Posterior cingulate gyrus (tissue), 11 donors: ENCODE measurements at regions of chr19 and their contacts with region 1.

Region 1: GRCh38 chr19:36850559-36851442 is at the start of gene ZNF345:
- DNase-seq: peak; percentile 84 to 98 (median 91)

Region 2: GRCh38 chr19:36687214-36688056 is 163.4 kb before region 1 on chr19 and contains the start of gene ZNF567:
- intact Hi-C with region 1: loop called (anchors 5 kb)
- DNase-seq: peak; percentile 96 to 100 (median 98)

Region 3: DNA sequence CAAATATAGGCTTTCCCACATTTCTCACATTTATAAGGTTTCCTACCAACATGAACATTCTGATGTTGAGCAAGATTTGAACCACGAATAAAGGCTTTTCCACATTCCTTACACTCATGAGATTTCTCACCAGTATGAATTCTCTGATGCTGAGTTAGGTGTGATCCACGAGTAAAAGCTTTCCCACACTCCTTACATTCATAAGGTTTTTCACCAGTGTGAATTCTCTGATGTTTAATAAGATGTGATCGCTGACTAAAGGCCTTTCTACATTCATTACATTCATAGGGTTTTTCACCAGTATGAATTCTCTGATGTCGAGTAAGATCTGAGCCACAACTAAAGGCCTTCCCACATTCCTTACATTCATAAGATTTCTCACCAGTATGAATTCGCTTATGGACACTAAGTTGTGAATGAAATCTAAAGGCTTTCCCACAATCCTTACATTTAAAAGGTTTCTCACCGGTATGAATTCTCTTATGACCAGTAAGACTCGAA is 31.6 kb before region 1 on chr19:
- intact Hi-C with region 1: no loop called
- DNase-seq: no peak

Region 4: DNA sequence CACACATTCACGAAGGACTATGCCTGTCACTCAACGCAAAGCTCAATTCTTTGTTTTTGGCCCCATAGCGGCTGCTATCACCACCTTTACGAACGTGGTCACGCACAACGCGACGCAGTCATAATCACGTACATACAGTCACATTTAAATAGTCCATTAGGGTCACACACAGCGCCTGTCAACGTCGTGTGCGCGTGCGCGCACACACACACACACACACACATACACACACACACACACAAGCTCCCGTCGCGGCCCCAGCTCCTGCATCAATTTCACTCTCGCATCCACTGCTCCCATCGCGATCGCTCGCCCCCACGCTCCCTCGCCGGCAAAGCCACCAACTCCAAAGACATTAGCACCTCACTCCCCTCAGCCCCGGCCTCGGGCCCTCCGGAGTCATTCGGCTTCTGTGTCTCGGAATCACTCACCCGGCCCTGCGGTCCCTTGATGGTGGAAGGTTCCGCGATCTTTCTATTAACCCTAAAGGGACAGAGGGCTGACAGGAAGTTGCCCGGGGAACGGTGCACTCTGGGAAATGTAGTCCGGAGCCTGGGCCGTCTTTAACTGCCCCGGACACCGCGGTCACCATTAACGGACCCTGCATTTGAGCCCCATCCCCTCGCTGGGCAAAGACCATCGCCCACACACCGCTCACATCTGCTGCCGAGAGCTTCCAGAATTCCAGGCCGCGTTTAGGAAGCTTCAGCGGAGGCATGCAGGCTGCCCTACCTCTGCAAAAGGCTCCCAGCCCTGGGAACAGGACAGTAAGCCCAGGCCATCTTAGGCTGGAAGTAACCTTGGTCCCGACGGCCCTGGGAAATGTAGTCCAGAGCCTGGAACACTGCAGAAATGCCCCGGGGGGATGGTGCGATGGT is 12.7 kb before region 1 on chr19 and contains the start of gene ZNF790:
- intact Hi-C with region 1: loop called (anchors 1 kb)
- DNase-seq: peak; percentile 87 to 98 (median 92)

Region 5: DNA sequence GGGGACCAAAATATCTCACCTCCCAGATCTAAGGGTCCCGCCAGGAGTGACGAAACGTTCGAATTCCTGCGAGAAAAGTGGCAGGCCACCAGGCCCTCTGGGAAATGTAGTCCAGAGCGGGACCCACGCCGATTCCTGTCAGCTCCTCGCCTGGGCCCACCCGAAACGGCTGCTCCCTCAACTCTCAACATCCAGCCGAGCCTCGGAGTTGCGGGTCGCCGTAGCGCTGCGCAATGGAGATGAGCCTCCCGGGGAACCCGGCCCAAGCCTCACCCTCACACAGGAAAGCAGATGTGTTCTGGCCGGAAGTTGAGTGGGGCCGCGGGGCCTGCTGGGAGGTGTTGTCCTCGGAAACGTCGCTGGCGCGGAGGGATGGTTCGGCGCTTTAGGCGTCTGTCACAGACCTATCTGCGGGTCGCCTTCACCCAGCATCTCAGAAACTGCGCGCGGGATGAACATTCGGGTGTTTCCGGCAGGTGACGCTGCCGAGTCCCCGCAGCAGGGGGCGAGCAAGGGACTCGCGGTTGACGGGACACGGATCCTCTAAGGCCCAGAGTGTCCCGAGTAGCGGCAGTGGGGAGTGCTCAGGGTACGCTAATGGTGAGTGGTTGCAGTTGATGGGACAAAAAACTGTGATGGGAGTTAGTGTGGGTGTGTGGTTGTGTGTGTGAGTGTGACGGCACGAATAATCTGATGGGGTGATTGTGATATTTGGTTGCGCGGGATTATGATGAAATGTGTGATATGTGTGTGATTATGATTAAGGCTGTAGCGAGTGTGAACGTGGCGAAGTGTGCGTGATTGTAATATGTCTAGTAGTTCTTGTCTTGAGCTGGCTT is 65.4 kb after region 1 on chr19 and contains the starts of genes ZNF568 and ZNF829:
- intact Hi-C with region 1: loop called (anchors 10 kb)
- DNase-seq: peak; percentile 84 to 99 (median 93)

Region 6: DNA sequence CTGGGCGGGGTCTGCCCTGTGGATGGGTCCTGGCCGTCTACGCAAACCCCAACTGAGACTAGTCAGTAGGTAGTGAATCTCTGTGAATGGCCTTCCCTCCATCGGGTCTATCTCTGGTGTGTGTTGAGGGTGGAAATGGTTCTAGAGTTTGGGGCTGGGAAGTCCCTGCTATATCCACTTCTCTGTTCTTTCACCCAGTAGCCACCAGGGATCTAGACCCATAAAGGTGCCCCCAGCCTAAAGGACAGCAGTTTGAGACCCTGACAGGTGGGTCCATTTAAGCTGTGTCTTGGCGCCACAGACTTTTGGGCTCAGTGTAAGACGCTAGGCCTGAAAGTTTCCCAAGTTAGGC is 123.0 kb after region 1 on chr19:
- intact Hi-C with region 1: no loop called
- DNase-seq: no peak